AG04449 (cell line): ENCODE measurements at regions of chr20 and their contacts with region 1.

Region 1: DNA sequence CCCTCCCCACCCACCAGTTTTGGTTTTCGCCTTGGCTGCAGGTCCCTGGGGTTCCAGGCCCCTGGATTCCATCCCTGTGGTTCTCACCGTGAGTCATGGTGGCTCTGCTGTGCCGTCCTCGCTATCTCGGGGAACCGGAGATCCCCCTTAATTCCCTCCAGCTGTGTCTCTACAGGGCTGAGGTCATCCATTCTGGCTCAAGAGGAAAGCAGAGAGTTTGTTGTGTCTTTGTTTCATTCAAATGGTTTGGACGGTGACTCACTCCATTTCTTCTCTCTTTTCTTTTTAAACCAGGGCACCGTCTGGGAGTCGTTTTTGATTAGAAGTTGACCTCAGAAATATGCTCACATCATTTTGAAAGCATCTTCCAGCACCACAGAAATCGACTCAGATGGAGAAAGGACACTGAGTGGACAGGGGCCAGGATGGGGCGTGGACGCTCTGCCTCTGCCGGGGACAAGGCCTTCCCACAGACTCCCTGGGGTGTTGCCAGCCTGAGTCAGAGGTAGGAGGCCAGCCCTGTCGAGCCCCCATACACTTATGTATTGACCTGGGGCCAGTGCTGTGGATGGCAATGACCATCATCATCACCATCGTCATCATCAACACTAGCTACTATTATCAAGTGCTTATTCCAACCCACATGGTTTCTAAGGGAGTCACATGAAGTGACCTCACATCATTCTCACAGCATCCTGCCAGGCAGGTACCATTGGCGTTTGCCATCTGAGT is 176.2 kb downstream of the NFATC2 start:
- DNase-seq: peak; percentile 100
- H3K4me3 ChIP-seq: no peak overlapping the region
- CTCF ChIP-seq: no peak

Region 2: DNA sequence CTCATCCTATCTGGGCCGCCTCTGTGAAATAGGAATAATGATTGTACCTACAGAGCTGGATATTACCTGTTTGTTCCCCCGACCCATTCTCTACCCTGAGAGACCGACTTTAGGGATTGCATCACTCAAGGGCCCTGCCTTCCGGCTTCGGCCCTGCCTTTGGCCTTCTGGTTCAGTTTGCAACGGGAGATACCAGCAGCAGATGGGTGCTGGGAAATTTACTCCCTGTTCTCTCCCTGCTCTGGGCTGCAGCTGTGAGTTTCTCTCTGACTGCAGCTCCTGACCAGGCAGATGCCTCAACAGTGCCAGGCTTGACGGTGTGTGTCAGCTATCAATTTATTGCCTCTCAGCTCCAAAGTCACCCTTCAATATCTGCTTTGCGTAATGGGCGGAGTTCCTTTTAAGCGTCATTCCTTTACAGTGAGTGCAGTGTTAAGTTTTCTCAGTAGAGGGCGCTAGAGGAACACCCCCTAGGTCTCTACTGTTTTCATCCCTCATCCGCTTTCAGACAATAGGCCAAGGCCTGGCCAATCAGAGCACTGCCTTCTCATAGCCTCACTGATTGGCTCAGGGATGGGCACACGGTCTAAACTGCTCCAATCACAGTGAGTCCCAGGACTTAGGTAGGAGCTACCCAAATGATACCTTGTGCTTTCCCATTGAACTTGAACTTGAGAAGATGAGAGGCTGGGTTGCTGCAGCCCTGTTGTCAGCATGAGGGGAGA is 373.4 kb before region 1 on chr20:
- CTCF ChIA-PET with region 1: interaction called, 31 read pairs
- POLR2A ChIA-PET with region 1: interaction called, 6 read pairs
- DNase-seq: no peak
- H3K4me3 ChIP-seq: no peak overlapping the region
- CTCF ChIP-seq: peak; percentile 57

Region 3: GRCh38 chr20:51298141-51298749 is 68.1 kb before region 1 on chr20:
- CTCF ChIA-PET with region 1: no interaction called
- POLR2A ChIA-PET with region 1: no interaction called
- DNase-seq: no peak
- H3K4me3 ChIP-seq: no peak overlapping the region
- CTCF ChIP-seq: no peak

Region 4: GRCh38 chr20:51378171-51378929 is 12.0 kb after region 1 on chr20:
- CTCF ChIA-PET with region 1: interaction called, 15 read pairs
- POLR2A ChIA-PET with region 1: no interaction called
- DNase-seq: no peak
- H3K4me3 ChIP-seq: no peak overlapping the region
- CTCF ChIP-seq: peak; percentile 12

Region 5: GRCh38 chr20:51385646-51386530 is 19.6 kb after region 1 on chr20:
- CTCF ChIA-PET with region 1: interaction called, 13 read pairs
- POLR2A ChIA-PET with region 1: no interaction called
- DNase-seq: no peak
- H3K4me3 ChIP-seq: no peak overlapping the region
- CTCF ChIP-seq: peak; percentile 70